Endothelial cell of umbilical vein (primary cell): ENCODE measurements at regions of chrX and their contacts with region 1.

Region 1: DNA sequence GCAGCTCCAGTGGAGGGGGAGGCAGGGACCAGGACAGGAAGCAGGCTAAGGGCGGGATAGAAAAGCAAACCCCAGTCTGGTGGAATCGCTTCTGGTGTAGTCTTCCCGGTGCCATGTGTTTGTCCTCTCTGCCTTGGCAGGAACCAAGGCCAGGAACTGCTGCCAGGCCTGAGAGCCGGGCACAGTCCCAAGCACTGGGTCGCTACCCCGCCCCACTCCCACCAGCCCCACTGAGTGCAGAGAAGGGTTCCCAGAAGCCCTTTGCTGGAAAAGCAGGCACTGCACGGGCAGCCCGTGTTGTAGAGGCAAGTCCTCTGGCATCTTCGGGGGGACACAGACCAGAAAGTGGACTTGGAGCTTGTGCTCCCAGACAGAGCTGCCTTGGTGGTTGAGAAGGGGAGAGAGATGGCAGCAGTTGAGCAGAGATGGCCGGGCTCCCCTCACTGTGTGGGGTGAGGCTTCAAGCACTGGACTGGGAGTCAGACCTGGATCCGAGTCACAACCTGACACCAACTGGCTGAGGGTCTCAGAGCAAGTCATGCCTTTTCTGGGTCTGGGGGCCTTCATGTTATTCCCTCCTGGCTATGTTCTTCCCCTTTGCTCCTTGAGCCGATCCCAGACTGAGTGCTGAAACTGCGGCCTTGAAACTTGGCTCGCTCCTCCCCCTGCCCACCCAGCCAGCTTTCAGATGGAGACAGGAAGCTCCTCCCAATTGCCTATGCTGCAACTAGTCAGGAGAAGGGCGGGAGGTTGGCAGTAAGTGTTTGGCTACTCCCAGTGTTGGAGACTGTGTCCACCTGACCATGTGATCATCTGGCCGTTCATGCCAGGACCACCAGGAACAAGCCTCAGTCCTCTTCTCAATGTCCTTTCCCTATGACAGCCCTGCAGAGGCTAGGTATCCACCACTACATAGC is 59.7 kb upstream of the MTM1 start:
- DNase-seq: peak; percentile 61
- H3K4me3 ChIP-seq: no peak overlapping the region
- H3K27ac ChIP-seq: peak overlapping the region; percentile 89
- H3K4me1 ChIP-seq: peaks cover 56% of the 10 kb centered on the region
- H3K27me3 ChIP-seq: no peaks in the 10 kb centered on the region
- CTCF ChIP-seq: no peak
- POLR2A ChIP-seq: no peak

Region 2: DNA sequence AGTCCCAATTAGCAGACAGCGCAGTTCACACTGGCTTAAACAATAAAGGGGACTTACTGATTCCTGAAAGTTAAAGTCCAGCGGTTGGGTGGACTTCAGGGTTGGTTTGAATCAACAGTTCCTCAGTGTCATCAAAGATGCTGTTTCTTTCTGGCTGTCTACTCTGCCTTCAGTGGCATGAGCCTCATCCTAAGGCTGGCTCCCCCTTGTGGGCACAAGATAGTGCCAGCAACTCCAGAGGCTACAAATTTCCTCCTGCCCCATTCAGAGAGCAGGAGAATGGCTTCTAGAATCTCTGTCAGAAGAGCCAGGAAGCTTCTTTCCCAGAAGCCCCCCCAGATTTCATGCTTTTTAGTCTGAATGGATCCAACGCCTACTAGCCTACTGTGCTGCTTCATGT is 22.7 kb before region 1 on chrX:
- CTCF ChIA-PET with region 1: interaction called, 6 read pairs
- POLR2A ChIA-PET with region 1: no interaction called
- dilution Hi-C with region 1: no loop called
- intact Hi-C with region 1: loop called (anchors 1 kb)
- DNase-seq: peak; percentile 44
- H3K4me3 ChIP-seq: no peak overlapping the region
- H3K27ac ChIP-seq: no peak overlapping the region
- H3K4me1 ChIP-seq: no peaks in the 10 kb centered on the region
- H3K27me3 ChIP-seq: no peaks in the 10 kb centered on the region
- CTCF ChIP-seq: peak; percentile 59 to 70
- POLR2A ChIP-seq: no peak

Region 3: GRCh38 chrX:150568320-150569154 is 59.8 kb after region 1 on chrX and contains the start of gene MTM1:
- CTCF ChIA-PET with region 1: no interaction called
- POLR2A ChIA-PET with region 1: no interaction called
- dilution Hi-C with region 1: no loop called
- intact Hi-C with region 1: loop called (anchors 1 kb)
- DNase-seq: peak; percentile 95
- H3K4me3 ChIP-seq: peak within 1 kb of the TSS; percentile 54 to 92 (median 75)
- H3K27ac ChIP-seq: peak within 1 kb of the TSS; percentile 21
- H3K4me1 ChIP-seq: peaks cover 11% of the 10 kb centered on the region
- H3K27me3 ChIP-seq: no peaks in the 10 kb centered on the region
- CTCF ChIP-seq: no peak
- POLR2A ChIP-seq: no peak
- total RNA-seq, gene MTM1: 10.1 and 13.2 TPM in 2 replicates

Region 4: DNA sequence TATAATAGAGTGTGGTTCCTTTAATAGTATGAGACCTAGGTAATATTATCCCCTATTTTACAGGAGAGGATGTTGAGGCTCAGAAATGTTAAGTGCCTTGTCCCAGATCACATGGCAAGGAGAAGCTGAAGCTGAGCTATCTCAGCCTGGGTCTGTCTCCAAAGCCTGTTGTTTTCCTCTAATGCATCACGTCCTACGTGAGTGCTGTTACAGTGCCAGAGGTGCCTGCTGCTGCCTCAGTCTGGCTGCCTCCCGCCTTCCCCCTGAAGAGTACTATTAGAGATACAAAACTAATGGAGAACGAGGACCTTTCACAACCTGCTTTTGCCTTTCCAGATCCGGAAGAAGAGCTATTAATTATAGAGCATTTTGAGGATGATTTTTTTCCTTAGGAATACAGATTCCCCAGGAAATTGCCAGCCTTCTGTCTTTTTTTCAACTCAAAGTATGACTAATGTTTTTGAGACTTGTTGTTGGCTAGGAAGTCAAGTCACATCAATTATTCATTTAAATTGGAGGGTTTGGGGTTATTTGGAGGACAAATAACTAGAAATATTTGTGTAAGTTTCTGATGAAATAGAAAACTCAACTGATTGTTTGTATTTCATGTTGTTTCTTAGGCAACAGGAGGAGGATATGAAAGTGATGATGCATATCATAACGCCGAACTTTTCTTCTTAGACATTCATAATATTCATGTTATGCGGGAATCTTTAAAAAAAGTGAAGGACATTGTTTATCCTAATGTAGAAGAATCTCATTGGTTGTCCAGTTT is 140.6 kb after region 1 on chrX:
- CTCF ChIA-PET with region 1: no interaction called
- POLR2A ChIA-PET with region 1: no interaction called
- dilution Hi-C with region 1: no loop called
- intact Hi-C with region 1: loop called (anchors 1 kb)
- DNase-seq: peak; percentile 82
- H3K4me3 ChIP-seq: peak overlapping the region in 1 of 3 experiments; percentile 9
- H3K27ac ChIP-seq: peak overlapping the region; percentile 85
- H3K4me1 ChIP-seq: peaks cover 38% of the 10 kb centered on the region
- H3K27me3 ChIP-seq: no peaks in the 10 kb centered on the region
- CTCF ChIP-seq: no peak
- POLR2A ChIP-seq: no peak